H1 (cell line): ENCODE measurements at regions of chr9 and their contacts with region 1.

Region 1: GRCh38 chr9:792282-793260 is 48.9 kb upstream of the DMRT1 start:
- DNase-seq: no peak
- H3K4me3 ChIP-seq: no peak overlapping the region
- H3K27ac ChIP-seq: no peak overlapping the region
- H3K4me1 ChIP-seq: no peaks in the 10 kb centered on the region
- H3K27me3 ChIP-seq: no peaks in the 10 kb centered on the region
- CTCF ChIP-seq: no peak
- EP300 ChIP-seq: no peak
- POLR2A ChIP-seq: no peak
- RAD21 ChIP-seq: no peak

Region 2: GRCh38 chr9:806285-807156 is 13.9 kb after region 1 on chr9:
- CTCF ChIA-PET with region 1: interaction called, 12 read pairs
- POLR2A ChIA-PET with region 1: no interaction called
- DNase-seq: no peak
- H3K4me3 ChIP-seq: no peak overlapping the region
- H3K27ac ChIP-seq: no peak overlapping the region
- H3K4me1 ChIP-seq: no peaks in the 10 kb centered on the region
- H3K27me3 ChIP-seq: no peaks in the 10 kb centered on the region
- CTCF ChIP-seq: peak in 2 of 3 experiments; percentile 57 to 67; a peak in 2 of 4 replicates
- EP300 ChIP-seq: no peak
- POLR2A ChIP-seq: no peak
- RAD21 ChIP-seq: peak; percentile 81 to 85